ENCODE measurements at regions of chr10 and their contacts with region 1.

Region 1: DNA sequence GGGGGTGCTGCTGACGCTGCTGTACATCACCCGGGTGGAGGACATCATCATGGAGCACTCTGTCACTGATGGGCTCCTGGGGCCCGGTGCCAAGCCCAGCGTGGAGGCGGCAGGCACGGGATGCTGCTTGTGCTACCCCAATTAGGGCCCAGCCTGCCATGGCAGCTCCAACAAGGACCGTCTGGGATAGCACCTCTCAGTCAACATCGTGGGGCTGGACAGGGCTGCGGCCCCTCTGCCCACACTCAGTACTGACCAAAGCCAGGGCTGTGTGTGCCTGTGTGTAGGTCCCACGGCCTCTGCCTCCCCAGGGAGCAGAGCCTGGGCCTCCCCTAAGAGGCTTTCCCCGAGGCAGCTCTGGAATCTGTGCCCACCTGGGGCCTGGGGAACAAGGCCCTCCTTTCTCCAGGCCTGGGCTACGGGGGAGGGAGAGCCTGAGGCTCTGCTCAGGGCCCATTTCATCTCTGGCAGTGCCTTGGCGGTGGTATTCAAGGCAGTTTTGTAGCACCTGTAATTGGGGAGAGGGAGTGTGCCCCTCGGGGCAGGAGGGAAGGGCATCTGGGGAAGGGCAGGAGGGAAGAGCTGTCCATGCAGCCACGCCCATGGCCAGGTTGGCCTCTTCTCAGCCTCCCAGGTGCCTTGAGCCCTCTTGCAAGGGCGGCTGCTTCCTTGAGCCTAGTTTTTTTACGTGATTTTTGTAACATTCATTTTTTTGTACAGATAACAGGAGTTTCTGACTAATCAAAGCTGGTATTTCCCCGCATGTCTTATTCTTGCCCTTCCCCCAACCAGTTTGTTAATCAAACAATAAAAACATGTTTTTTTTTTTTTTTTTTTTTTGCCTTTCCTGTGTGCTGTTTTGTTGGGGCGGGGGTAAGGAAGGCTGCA is 55.8 kb downstream of the TSPAN15 start:
- DNase-seq: peak; percentile 24
- ATAC-seq: peak; percentile 20

Region 2: DNA sequence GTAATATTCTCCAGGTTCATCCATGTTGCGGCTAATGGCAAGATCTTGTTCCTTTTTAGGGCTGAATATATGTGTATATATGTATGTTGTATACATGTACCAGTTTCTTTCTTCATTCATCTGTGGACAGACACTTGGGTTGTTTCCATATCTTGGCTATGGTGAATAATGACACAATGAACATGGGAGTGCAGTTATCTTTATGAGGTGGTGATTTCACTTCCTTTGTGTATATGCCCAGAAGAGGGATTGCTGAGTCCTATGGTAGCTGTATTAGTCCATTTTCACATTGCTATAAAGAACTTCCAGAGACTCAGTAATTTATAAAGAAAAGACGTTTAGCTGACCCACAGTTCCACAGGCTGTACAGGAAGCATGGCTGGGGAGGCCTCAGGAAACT is 72.9 kb before region 1 on chr10:
- intact Hi-C with region 1: loop called (anchors 5 kb)
- DNase-seq: no peak
- ATAC-seq: no peak

Region 3: DNA sequence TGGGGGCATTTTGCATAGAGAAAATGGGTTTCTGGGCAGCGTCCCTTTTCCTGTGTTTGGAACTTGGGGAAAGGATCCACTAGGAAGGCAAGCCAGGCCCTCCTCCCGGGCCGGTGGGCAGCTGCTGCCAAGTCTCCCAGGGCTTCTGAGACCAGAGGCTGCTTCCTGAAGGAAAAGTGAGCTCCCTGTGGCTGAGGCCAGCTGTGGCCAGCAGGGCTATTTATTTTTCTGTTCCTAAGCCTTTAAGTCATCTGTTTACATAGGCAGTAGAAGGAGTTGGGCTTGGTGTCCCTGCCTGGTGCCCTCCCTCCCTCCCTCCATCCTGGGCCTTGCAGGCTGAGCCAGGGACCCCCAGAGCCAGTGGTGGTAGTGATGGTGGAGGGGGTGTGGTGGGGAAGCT is 224.1 kb after region 1 on chr10:
- intact Hi-C with region 1: no loop called
- DNase-seq: peak; percentile 66
- ATAC-seq: peak; percentile 5